HepG2 (cell line): ENCODE measurements at regions of chr5 and their contacts with region 1.

Region 1: DNA sequence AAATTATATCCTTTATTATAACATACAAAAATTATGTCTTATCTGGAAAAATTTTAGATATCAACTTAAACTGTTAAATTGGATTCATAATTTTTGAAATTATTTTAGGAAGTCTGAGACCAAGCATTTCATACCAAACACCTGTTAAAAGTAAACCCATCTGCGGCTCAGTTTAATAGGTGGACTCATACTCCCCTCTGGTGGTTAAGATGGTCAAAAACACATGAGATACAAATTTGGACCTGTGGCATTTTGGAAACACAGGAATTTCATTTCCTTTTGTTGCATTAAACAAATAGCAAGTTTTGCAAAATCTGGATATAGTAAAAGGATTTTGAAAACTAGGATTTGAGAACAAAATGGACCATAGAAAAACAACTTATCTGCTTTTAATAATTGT is 53.7 kb downstream of the RGMB start:
- DNase-seq: peak; percentile 32
- ATAC-seq: peak; percentile 74
- H3K4me3 ChIP-seq: no peak overlapping the region
- H3K27ac ChIP-seq: no peak overlapping the region
- H3K4me1 ChIP-seq: no peaks in the 10 kb centered on the region
- H3K27me3 ChIP-seq: no peaks in the 10 kb centered on the region; a peak in 1 of 5 replicates
- CTCF ChIP-seq: peak; percentile 68
- EP300 ChIP-seq: no peak
- POLR2A ChIP-seq: no peak
- RAD21 ChIP-seq: peak; percentile 13; the same call in 1 of the 2 replicates

Region 2: DNA sequence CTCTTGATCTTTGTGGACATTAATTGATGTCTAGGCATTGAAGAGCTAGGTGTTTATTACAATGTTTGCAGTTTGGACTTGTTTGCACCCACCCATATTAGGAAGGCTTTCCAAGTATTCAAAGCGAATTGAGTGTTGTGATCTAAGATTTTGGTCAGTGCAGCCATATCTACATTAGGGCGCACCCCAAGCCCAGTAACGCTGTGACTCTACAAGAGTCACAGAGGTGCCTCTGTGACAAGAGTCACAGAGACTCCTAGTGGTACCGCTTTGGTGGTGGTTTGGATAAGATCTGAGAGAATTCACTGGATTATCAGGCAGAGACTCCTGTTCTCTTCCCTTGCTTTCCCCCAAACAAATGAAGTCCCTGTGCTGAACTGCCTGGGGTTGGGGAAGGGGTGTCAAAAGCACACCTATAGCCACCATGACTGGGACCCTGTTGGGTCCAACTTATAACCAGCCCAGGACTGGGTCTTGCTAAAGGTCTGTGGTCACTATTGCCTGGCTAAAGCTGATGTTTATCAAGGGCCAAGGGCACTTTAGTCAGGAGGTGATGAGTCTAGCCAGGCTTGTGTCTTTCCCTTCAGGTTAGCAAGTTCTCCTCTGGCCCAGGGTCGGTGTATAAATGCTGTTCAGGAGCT is 1530.0 kb before region 1 on chr5:
- CTCF ChIA-PET with region 1: no interaction called
- POLR2A ChIA-PET with region 1: no interaction called
- in situ Hi-C with region 1: no loop called
- intact Hi-C with region 1: loop called (anchors 5 kb)
- DNase-seq: peak; percentile 70
- ATAC-seq: peak; percentile 100
- H3K4me3 ChIP-seq: no peak overlapping the region
- H3K27ac ChIP-seq: no peak overlapping the region
- H3K4me1 ChIP-seq: no peaks in the 10 kb centered on the region
- H3K27me3 ChIP-seq: no peaks in the 10 kb centered on the region
- CTCF ChIP-seq: peak; percentile 70
- EP300 ChIP-seq: no peak
- POLR2A ChIP-seq: no peak
- RAD21 ChIP-seq: peak; percentile 75